IMR-90 (cell line): ENCODE measurements at regions of chr18 and their contacts with region 1.

Region 1: GRCh38 chr18:50356036-50356945 is 18.6 kb upstream of the SKA1 start:
- DNase-seq: no peak
- ATAC-seq: no peak; the same call in 1 of the 2 replicates
- H3K4me3 ChIP-seq: no peak overlapping the region
- H3K27ac ChIP-seq: no peak overlapping the region
- H3K4me1 ChIP-seq: no peaks in the 10 kb centered on the region
- H3K27me3 ChIP-seq: peaks cover 6% of the 10 kb centered on the region
- CTCF ChIP-seq: no peak
- POLR2A ChIP-seq: no peak
- RAD21 ChIP-seq: no peak

Region 2: DNA sequence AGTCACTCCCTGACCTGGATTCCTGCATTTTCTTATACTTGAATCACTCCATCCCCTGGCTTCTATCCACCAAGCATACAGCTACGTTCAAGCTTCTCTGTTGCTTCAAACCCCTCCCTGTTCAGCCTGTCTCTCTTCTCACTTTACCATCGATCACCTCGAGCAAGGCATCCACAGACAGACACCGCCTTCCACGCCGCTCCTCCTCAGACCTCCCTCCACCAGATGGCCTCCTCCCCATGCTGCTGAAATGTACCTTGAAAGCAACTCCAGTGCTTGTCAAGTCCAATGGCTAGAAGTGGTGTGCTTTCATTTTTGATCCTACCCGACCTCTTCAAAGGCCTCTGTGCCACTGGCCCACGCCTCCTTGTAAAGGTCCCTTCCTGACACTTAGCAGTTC is 411.6 kb before region 1 on chr18:
- CTCF ChIA-PET with region 1: no interaction called
- POLR2A ChIA-PET with region 1: no interaction called
- dilution Hi-C with region 1: no loop called
- in situ Hi-C with region 1: no loop called
- intact Hi-C with region 1: loop called (anchors 5 kb)
- DNase-seq: peak; percentile 7
- ATAC-seq: peak; percentile 62
- H3K4me3 ChIP-seq: no peak overlapping the region
- H3K27ac ChIP-seq: no peak overlapping the region
- H3K4me1 ChIP-seq: no peaks in the 10 kb centered on the region
- H3K27me3 ChIP-seq: peaks cover 4% of the 10 kb centered on the region; the same call in 1 of the 2 replicates
- CTCF ChIP-seq: no peak
- POLR2A ChIP-seq: no peak
- RAD21 ChIP-seq: 0 out of 2 replicates have a peak, but pooled peaks have one; percentile 8

Region 3: GRCh38 chr18:50203801-50204604 is 152.3 kb before region 1 on chr18:
- CTCF ChIA-PET with region 1: interaction called, 3 read pairs
- POLR2A ChIA-PET with region 1: no interaction called
- dilution Hi-C with region 1: no loop called
- in situ Hi-C with region 1: no loop called
- intact Hi-C with region 1: loop called (anchors 5 kb)
- DNase-seq: peak; percentile 9
- ATAC-seq: peak; percentile 53; the same call in 1 of the 2 replicates
- H3K4me3 ChIP-seq: no peak overlapping the region; the same call in 1 of the 2 replicates
- H3K27ac ChIP-seq: no peak overlapping the region
- H3K4me1 ChIP-seq: no peaks in the 10 kb centered on the region; the same call in 1 of the 2 replicates
- H3K27me3 ChIP-seq: peaks cover 9% of the 10 kb centered on the region
- CTCF ChIP-seq: peak; percentile 52
- POLR2A ChIP-seq: no peak
- RAD21 ChIP-seq: peak; percentile 53

Region 4: DNA sequence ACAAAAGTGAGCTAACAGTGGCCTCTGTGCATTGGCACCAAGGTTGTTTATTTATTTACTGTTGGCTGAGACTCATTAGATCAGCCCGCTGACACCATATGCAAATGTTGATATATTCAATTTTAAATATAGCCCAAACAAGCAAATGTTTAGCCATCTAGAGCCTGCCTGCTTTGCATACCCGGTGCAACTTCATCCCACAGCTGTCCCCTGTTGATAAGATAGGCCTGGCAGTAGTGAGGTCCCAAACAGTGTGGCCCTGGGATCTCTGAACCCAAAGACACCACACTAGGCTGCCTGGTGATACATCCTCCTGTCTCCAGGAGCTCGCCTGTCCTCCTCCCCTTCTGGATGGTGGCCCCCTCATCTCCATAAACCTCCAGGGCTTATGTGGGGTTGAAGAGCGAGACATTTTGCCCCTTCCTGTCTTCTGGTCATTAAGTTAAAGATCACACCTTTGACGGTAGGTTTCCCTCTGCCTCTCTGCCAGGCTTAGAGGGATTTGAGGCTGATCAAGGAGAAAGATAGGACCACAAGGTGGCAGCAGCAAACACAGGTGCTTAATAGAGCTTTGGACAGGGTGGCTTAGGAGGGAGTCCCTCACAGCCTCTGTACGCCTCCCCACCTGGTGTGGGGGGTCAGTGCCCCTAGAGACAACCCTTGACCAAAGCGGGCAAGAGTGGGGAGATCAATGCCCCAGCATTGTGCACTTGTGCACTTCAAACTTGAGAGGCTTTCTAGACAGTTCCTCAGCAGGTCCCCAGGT is 137.7 kb before region 1 on chr18:
- CTCF ChIA-PET with region 1: interaction called, 5 read pairs
- POLR2A ChIA-PET with region 1: no interaction called
- dilution Hi-C with region 1: no loop called
- in situ Hi-C with region 1: no loop called
- intact Hi-C with region 1: loop called (anchors 5 kb)
- DNase-seq: peak; percentile 14
- ATAC-seq: peak; percentile 29; the same call in 1 of the 2 replicates
- H3K4me3 ChIP-seq: no peak overlapping the region
- H3K27ac ChIP-seq: no peak overlapping the region
- H3K4me1 ChIP-seq: no peaks in the 10 kb centered on the region
- H3K27me3 ChIP-seq: 0 out of 2 replicates have a peak, but pooled peaks cover 2% of the 10 kb centered on the region
- CTCF ChIP-seq: peak; percentile 21; the same call in 1 of the 2 replicates
- POLR2A ChIP-seq: no peak
- RAD21 ChIP-seq: peak; percentile 28; the same call in 1 of the 2 replicates

Region 5: GRCh38 chr18:50287441-50288347 is 68.6 kb before region 1 on chr18 and contains the start of gene CXXC1:
- CTCF ChIA-PET with region 1: interaction called, 3 read pairs
- POLR2A ChIA-PET with region 1: no interaction called
- dilution Hi-C with region 1: no loop called
- in situ Hi-C with region 1: no loop called
- intact Hi-C with region 1: loop called (anchors 5 kb)
- DNase-seq: peak; percentile 100
- ATAC-seq: peak; percentile 96
- H3K4me3 ChIP-seq: peak within 1 kb of the TSS; percentile 60
- H3K27ac ChIP-seq: peak within 1 kb of the TSS; percentile 33
- H3K4me1 ChIP-seq: peaks cover 3% of the 10 kb centered on the region; the same call in 1 of the 2 replicates
- H3K27me3 ChIP-seq: peaks cover 5% of the 10 kb centered on the region; the same call in 1 of the 2 replicates
- CTCF ChIP-seq: peak; percentile 56
- POLR2A ChIP-seq: no peak
- RAD21 ChIP-seq: no peak
- total RNA-seq, gene CXXC1: 24.0 and 29.4 TPM in 2 replicates